ENCODE measurements at regions of chr14 and their contacts with region 1.

Region 1: DNA sequence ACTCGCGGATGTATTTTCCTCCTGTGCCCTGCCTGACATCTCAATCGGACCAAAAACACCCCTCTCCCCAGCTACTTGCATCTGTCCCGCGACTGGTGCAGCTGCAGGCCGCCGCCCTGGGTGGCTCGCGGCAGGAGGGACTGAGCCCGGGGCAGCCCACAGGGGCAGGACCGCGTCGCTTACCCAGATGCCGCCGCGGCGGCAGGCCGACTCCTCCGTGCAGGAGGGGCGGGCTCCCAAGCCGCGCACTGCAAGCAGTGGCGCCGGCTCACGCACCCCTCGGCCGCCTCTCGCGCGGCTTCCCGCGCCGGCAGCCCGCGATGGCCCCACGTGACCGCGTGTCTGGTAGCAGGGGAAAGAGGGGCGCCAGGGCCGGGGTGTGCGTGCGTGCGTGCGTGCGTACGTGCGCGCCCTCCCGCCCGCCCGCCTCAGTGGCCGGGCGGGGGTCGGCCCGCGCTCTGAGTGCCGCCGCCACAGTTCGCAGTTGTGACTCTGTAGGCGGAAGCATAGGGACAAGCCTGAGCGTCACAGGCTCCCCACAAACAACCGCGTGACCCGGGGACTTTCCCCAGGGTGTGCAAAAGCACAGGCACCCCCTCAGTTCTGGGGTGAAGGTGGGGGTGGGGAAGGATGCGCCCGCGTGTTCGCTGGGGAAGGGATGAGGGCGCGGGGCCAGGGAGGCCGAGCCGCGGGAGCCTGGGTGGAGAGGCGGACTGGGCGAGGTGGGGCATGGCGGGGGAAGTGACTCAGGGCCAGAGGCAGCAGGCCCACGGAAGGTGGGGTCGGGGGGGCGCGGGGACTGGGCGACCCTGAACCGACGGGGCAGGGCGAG is at the start of gene ZBTB25:
- DNase-seq: peak; percentile 93 to 99 (median 98)
- ATAC-seq: peak; percentile 66 to 73
- H3K4me3 Mint-ChIP-seq: peak within 1 kb of the TSS; percentile 93 to 100 (median 98)
- H3K27ac Mint-ChIP-seq: peak within 1 kb of the TSS; percentile 97 to 100 (median 100)
- H3K4me1 Mint-ChIP-seq: peaks cover 29 to 79% (median 70%) of the 10 kb centered on the region in 4 donors
- H3K27me3 Mint-ChIP-seq: peaks cover 0 to 4% (median 0%) of the 10 kb centered on the region in 5 donors
- polyA plus RNA-seq, gene ZBTB25: 20.6 to 38.2 (median 24.3) TPM

Region 2: DNA sequence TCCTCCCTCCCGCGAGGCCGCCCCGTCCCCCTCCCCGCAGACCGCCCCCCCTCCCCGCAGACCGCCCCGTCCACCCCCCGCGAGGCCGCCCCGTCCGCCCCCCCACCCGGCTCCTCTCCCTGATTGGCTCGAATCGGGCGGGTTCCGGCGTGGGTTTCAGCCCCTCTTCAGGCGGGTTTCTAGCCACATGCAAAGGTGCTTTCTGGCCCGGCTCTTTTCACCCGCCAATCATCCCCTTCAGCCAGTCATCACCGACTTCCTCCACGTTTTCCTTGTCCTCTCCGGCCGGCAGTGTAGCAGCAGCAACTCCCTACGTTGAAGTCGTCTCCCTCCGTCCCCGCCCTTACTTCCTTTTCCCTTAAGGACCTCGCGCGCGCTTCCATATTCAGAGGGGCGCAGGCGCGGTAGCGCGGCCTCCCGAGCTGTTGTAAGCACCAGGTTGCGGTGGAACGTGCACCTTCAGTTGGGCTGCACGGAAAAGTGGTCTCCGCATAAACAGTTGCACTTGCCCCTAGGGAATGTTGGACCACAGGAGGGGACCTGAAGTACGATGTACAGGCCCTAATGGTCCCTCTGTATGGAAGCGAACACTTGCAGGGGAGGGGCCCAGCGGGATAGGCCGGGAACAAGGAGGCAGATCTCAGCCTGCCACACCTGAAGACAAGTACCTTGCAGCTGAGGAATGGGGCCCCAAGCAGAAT is 164.9 kb before region 1 on chr14:
- POLR2A ChIA-PET with region 1: interaction called, 17 read pairs
- DNase-seq: peak; percentile 67 to 92 (median 80)
- ATAC-seq: peak; percentile 83 to 88
- H3K4me3 Mint-ChIP-seq: peak overlapping the region; percentile 84 to 98 (median 94)
- H3K27ac Mint-ChIP-seq: peak overlapping the region; percentile 78 to 96 (median 92)
- H3K4me1 Mint-ChIP-seq: peaks cover 9 to 24% (median 21%) of the 10 kb centered on the region in 4 donors
- H3K27me3 Mint-ChIP-seq: no peaks in the 10 kb centered on the region

Region 3: GRCh38 chr14:64387694-64388532 is 115.8 kb before region 1 on chr14 and contains the start of gene MTHFD1:
- POLR2A ChIA-PET with region 1: interaction called, 20 read pairs
- DNase-seq: peak; percentile 92 to 99 (median 96)
- ATAC-seq: peak; percentile 86 to 88
- H3K4me3 Mint-ChIP-seq: peak within 1 kb of the TSS; percentile 91 to 99 (median 97)
- H3K27ac Mint-ChIP-seq: peak within 1 kb of the TSS; percentile 88 to 98 (median 96)
- H3K4me1 Mint-ChIP-seq: peaks cover 20 to 43% (median 37%) of the 10 kb centered on the region in 4 donors
- H3K27me3 Mint-ChIP-seq: no peaks in the 10 kb centered on the region
- polyA plus RNA-seq, gene MTHFD1: 34.9 to 44.2 (median 41.2) TPM

Region 4: GRCh38 chr14:64465191-64465822 is 38.4 kb before region 1 on chr14 and contains the start of gene AKAP5:
- POLR2A ChIA-PET with region 1: interaction called, 15 read pairs
- DNase-seq: peak; percentile 27 to 72 (median 58)
- ATAC-seq: peak; percentile 89 to 95
- H3K4me3 Mint-ChIP-seq: peak within 1 kb of the TSS; percentile 75 to 92 (median 88)
- H3K27ac Mint-ChIP-seq: peak within 1 kb of the TSS; percentile 48 to 89 (median 74)
- H3K4me1 Mint-ChIP-seq: peaks cover 17 to 43% (median 41%) of the 10 kb centered on the region in 4 donors
- H3K27me3 Mint-ChIP-seq: no peaks in the 10 kb centered on the region
- polyA plus RNA-seq, gene AKAP5: 0.05 to 0.38 (median 0.07) TPM

Region 5: DNA sequence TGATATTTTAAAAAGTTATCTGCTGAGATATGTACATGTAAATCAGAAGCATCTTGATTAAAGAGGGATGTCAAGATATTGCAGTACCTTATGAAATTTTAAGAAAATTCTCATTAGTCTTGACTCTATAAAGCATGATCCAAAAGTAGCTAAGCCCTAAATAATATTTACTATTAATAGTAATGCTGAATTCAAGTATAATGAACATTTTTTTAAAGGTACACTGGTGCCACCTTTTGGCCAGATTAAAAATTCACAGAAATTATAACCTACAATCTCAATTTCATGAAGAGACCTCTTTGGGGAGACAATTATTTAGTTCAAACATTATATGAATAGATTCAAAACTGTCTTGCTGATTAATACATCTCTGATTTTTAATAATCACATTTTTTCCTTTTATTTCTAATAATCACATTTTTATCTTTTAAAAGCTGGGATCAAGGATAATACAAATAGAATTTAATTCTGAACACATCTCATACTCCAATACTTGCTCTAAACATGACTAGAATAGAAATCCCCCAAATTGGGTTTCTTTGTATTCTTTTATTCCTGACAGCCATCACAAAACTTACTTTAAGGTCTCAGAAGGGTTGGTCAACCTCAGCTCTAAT is 25.0 kb before region 1 on chr14:
- POLR2A ChIA-PET with region 1: interaction called, 11 read pairs
- DNase-seq: peak in 3 of 10 donors; percentile 39 to 51 (median 41)
- ATAC-seq: no peak
- H3K4me3 Mint-ChIP-seq: no peak overlapping the region
- H3K27ac Mint-ChIP-seq: peak overlapping the region in 5 of 10 donors; percentile 8 to 82 (median 32)
- H3K4me1 Mint-ChIP-seq: peaks cover 5 to 11% (median 10%) of the 10 kb centered on the region in 4 donors
- H3K27me3 Mint-ChIP-seq: no peaks in the 10 kb centered on the region

Region 6: DNA sequence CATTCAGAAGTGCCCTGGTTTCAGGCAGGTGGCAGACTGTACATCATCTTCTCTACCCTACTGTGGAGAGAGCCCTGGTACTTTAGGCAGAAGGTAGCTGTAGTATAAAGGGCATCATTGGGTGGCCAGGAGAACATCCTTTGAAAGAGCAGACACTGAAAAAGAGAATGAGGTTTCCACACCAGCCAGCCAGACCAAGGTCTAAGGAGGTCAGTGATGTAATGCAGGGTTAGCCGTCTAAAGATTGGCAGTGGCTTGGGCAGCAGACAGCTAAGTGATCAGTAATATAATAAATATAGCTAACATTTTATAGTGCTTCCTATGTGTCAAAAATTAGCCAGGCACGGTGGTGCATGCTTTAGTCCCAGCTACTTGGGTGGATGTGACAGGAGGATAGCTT is 12.1 kb before region 1 on chr14:
- POLR2A ChIA-PET with region 1: interaction called, 69 read pairs
- DNase-seq: no peak
- ATAC-seq: no peak
- H3K4me3 Mint-ChIP-seq: peak overlapping the region in 1 of 10 donors; percentile 30
- H3K27ac Mint-ChIP-seq: peak overlapping the region in 4 of 10 donors; percentile 39 to 81 (median 54)
- H3K4me1 Mint-ChIP-seq: peaks cover 34 to 68% (median 60%) of the 10 kb centered on the region in 4 donors
- H3K27me3 Mint-ChIP-seq: no peaks in the 10 kb centered on the region

Region 7: DNA sequence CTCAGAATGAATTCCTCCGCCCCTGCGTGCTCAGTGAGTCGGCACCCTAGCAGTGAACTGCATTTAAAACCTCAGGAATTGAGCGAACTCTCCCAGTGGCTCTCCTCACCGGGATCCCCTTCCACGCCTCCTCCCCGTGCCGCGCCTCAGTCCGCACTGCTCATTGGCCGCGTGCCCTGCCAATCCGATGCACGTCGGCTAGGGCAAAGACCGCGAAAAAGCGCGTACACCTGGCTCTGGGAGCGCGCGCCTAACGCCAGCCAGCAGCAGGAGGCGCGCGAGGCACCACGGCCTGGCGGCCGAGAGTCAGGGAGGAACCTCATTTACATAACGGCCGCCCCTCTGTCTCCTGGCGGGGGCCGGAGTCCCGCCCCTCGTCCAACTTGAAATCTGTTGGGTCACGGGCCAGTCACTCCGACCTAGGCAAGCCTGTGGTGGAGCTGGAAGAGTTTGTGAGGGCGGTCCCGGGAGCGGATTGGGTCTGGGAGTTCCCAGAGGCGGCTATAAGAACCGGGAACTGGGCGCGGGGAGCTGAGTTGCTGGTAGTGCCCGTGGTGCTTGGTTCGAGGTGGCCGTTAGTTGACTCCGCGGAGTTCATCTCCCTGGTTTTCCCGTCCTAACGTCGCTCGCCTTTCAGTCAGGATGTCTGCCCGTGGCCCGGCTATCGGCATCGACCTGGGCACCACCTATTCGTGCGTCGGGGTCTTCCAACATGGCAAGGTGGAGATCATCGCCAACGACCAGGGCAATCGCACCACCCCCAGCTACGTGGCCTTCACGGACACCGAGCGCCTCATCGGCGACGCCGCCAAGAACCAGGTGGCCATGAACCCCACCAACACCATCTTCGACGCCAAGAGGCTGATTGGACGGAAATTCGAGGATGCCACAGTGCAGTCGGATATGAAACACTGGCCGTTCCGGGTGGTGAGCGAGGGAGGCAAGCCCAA is 36.8 kb after region 1 on chr14 and contains the start of gene HSPA2:
- POLR2A ChIA-PET with region 1: interaction called, 24 read pairs
- DNase-seq: peak; percentile 86 to 95 (median 90)
- ATAC-seq: peak; percentile 89 to 90
- H3K4me3 Mint-ChIP-seq: peak within 1 kb of the TSS; percentile 94 to 99 (median 97)
- H3K27ac Mint-ChIP-seq: peak within 1 kb of the TSS; percentile 84 to 96 (median 92)
- H3K4me1 Mint-ChIP-seq: peaks cover 19 to 38% (median 31%) of the 10 kb centered on the region in 4 donors
- H3K27me3 Mint-ChIP-seq: peaks cover 0 to 11% (median 1%) of the 10 kb centered on the region in 5 donors
- polyA plus RNA-seq, gene HSPA2: 0.30 to 1.2 TPM in 2 of 3 donors, not detected in the other